ENCODE measurements at regions of chr7 and their contacts with region 1.

Region 1: GRCh38 chr7:76020031-76020714 is 25.8 kb upstream of the TMEM120A start:
- DNase-seq: peak; percentile 91
- H3K4me3 Mint-ChIP-seq: peak overlapping the region; percentile 25
- H3K27ac Mint-ChIP-seq: peak overlapping the region; percentile 70
- H3K4me1 Mint-ChIP-seq: peaks cover 13% of the 10 kb centered on the region
- H3K27me3 Mint-ChIP-seq: no peaks in the 10 kb centered on the region

Region 2: GRCh38 chr7:75866489-75867389 is 153.4 kb before region 1 on chr7:
- intact Hi-C with region 1: loop called (anchors 1 kb)
- DNase-seq: peak; percentile 83
- H3K4me3 Mint-ChIP-seq: no peak overlapping the region
- H3K27ac Mint-ChIP-seq: no peak overlapping the region
- H3K4me1 Mint-ChIP-seq: peaks cover 23% of the 10 kb centered on the region
- H3K27me3 Mint-ChIP-seq: peaks cover 13% of the 10 kb centered on the region

Region 3: DNA sequence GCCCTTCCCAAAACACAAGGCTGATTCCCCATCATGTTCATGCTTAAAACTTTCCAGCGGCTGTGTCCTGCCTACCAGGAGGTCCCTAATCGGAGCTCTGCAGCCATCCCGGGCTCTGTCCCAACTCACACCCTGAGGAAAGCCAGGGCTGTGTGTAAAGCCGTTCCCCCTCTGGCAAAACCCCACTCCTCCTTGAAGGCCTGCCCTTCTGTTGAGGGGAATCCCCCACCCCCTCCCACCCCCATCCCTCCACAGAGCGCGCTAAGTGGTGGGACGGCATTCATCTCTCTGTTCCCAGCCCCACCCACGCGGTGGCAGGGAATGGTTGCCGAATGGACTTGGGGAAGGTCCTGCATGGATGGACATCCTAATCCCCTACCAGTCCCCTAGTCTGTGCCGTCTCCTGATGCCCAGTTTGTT is 25.1 kb before region 1 on chr7:
- intact Hi-C with region 1: no loop called
- DNase-seq: no peak
- H3K4me3 Mint-ChIP-seq: peak overlapping the region; percentile 81
- H3K27ac Mint-ChIP-seq: no peak overlapping the region
- H3K4me1 Mint-ChIP-seq: peaks cover 32% of the 10 kb centered on the region
- H3K27me3 Mint-ChIP-seq: no peaks in the 10 kb centered on the region

Region 4: GRCh38 chr7:76393116-76394031 is 373.2 kb after region 1 on chr7:
- intact Hi-C with region 1: no loop called
- DNase-seq: peak; percentile 98
- H3K4me3 Mint-ChIP-seq: peak overlapping the region; percentile 90
- H3K27ac Mint-ChIP-seq: peak overlapping the region; percentile 99
- H3K4me1 Mint-ChIP-seq: peaks cover 25% of the 10 kb centered on the region
- H3K27me3 Mint-ChIP-seq: no peaks in the 10 kb centered on the region

Measured in activated CD4-positive, alpha-beta T cell treated with anti-CD3 and anti-CD28 coated beads, Interleukin-2, amount 10 ng/mL, durations not matched to agents 24 days and 14 days (primary cell).